ENCODE measurements at regions of chr7 and their contacts with region 1.

Region 1: GRCh38 chr7:116316833-116317612 is 106.7 kb downstream of the TES start:
- DNase-seq: peak; percentile 62
- H3K4me3 Mint-ChIP-seq: no peak overlapping the region
- H3K27ac Mint-ChIP-seq: peak overlapping the region; percentile 48
- H3K4me1 Mint-ChIP-seq: peaks cover 16% of the 10 kb centered on the region
- H3K27me3 Mint-ChIP-seq: peaks cover 24% of the 10 kb centered on the region

Region 2: DNA sequence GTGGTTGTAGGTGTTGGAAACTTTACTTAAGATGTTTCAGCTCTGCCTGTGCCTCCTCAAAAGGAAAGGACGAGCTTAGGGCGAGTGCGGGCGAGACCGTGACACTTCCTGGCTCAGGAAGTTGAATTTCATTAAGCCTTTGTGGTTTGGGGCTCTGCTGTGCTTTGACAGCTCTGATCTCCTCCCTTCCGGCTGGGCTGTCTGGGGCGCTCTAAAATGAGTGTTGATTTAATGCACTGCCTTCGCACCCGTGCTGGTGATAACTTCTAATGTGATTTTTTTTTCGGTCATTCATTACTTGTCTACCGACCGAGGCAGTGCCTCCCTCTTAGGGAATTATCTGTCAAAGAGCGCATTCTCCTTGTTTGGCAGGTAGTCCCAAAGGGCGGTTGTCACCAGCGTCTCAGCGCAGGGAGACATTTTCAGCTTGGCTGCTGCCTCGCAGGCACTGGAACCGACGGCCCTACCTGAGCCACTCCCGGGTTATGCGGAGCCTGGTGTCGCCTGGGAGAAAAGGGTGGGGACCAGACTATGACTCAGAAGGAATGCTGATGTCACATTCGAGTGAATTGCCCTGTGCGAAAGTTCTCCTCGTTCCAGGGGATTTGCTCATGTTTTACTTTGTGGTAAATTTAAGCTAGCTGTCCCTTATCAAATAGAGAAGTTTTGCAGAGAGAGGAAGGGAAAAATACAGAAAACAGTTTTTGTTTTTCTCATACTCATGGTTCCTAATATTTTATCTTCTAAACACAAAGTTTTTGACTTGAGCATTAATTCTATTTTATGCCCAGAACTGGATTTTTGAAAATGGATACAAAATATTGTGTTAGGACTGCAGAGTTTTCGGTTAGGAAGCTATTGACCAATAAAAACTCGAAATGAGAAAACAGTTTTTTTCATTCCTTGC is 105.8 kb before region 1 on chr7:
- CTCF ChIA-PET with region 1: no interaction called
- POLR2A ChIA-PET with region 1: no interaction called
- intact Hi-C with region 1: loop called (anchors 2 kb)
- DNase-seq: peak; percentile 86
- H3K4me3 Mint-ChIP-seq: peak overlapping the region; percentile 96
- H3K27ac Mint-ChIP-seq: peak overlapping the region; percentile 99
- H3K4me1 Mint-ChIP-seq: peaks cover 55% of the 10 kb centered on the region
- H3K27me3 Mint-ChIP-seq: no peaks in the 10 kb centered on the region

Region 3: DNA sequence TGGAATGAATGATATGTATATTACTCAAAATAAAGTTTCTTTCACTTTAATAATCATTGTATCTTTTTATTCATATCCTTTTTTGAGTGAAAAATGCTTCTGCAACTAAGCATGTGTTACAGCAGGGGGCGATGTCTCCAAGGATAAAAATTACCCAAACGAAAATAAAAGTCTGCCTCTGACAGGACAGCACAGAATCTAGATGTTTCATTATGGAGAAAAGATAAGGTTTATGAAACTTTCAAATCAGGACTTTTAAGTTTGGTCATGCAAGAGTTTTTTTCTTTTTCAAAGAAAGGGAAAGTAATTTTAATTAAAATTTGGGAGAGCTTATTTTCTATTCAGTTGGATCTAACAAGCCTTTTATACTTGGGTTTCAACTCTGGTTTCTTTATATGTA is 58.3 kb before region 1 on chr7:
- CTCF ChIA-PET with region 1: interaction called, 3 read pairs
- POLR2A ChIA-PET with region 1: no interaction called
- intact Hi-C with region 1: loop called (anchors 2 kb)
- DNase-seq: no peak
- H3K4me3 Mint-ChIP-seq: no peak overlapping the region
- H3K27ac Mint-ChIP-seq: no peak overlapping the region
- H3K4me1 Mint-ChIP-seq: peaks cover 12% of the 10 kb centered on the region
- H3K27me3 Mint-ChIP-seq: no peaks in the 10 kb centered on the region

Region 4: DNA sequence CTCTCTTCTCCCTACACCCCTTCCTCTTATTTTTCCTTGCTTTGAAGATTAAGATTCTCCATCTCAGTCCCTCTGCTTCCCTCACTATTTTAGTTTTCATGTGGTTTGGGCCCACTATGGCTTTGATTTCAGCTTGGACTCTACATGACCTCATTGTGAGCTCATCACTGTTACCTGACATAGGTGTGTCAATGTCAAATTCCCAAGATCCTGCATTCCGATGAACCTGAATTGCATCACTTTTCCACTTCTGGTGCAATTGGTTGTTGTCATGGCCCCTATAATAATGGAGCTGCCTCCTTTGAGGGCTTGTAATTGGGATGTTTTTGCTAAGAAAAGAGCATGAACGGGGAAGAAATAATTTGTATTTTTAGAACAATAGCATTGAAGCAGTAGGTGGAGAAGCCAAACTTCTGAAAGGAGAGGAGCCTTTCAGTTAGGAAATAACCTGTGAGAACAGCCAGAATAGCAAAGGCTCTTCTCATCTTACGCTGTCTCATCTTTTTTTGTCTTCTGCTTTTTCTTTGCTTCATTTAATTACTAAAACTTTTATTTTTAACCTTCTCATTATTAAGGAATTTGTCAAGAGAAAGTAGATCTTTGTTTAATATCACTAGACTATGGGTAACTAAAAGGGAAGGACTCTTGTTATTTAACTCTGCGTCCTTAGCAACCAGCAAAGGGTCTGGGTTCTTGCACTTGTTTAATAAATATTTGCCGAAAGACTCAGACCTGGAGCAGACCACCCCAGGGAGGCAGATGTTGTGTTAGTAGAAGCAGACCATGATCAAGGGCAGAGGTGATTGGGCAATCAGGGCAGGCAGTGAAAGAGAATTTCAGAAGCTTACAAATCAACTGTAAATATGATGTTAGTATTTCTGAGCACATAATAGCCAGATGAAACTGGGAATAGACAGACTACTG is 11.3 kb before region 1 on chr7:
- CTCF ChIA-PET with region 1: no interaction called
- POLR2A ChIA-PET with region 1: no interaction called
- intact Hi-C with region 1: no loop called
- DNase-seq: no peak
- H3K4me3 Mint-ChIP-seq: no peak overlapping the region
- H3K27ac Mint-ChIP-seq: no peak overlapping the region
- H3K4me1 Mint-ChIP-seq: no peaks in the 10 kb centered on the region
- H3K27me3 Mint-ChIP-seq: peaks cover 9% of the 10 kb centered on the region

Region 5: GRCh38 chr7:116340943-116341907 is 24.2 kb after region 1 on chr7:
- CTCF ChIA-PET with region 1: no interaction called
- POLR2A ChIA-PET with region 1: no interaction called
- intact Hi-C with region 1: loop called (anchors 1 kb)
- DNase-seq: no peak
- H3K4me3 Mint-ChIP-seq: no peak overlapping the region
- H3K27ac Mint-ChIP-seq: no peak overlapping the region
- H3K4me1 Mint-ChIP-seq: peaks cover 4% of the 10 kb centered on the region
- H3K27me3 Mint-ChIP-seq: peaks cover 10% of the 10 kb centered on the region

Region 6: GRCh38 chr7:116511552-116512519 is 194.8 kb after region 1 on chr7:
- CTCF ChIA-PET with region 1: no interaction called
- POLR2A ChIA-PET with region 1: no interaction called
- intact Hi-C with region 1: loop called (anchors 5 kb)
- DNase-seq: peak; percentile 24
- H3K4me3 Mint-ChIP-seq: peak overlapping the region; percentile 54
- H3K27ac Mint-ChIP-seq: no peak overlapping the region
- H3K4me1 Mint-ChIP-seq: peaks cover 18% of the 10 kb centered on the region
- H3K27me3 Mint-ChIP-seq: peaks cover 17% of the 10 kb centered on the region

Region 7: GRCh38 chr7:116576350-116577319 is 259.6 kb after region 1 on chr7:
- CTCF ChIA-PET with region 1: no interaction called
- POLR2A ChIA-PET with region 1: no interaction called
- intact Hi-C with region 1: loop called (anchors 1 kb)
- DNase-seq: peak; percentile 35
- H3K4me3 Mint-ChIP-seq: no peak overlapping the region
- H3K27ac Mint-ChIP-seq: no peak overlapping the region
- H3K4me1 Mint-ChIP-seq: peaks cover 10% of the 10 kb centered on the region
- H3K27me3 Mint-ChIP-seq: peaks cover 6% of the 10 kb centered on the region

Region 8: GRCh38 chr7:116786791-116787443 is 469.9 kb after region 1 on chr7:
- CTCF ChIA-PET with region 1: no interaction called
- POLR2A ChIA-PET with region 1: no interaction called
- intact Hi-C with region 1: loop called (anchors 10 kb)
- DNase-seq: peak; percentile 40
- H3K4me3 Mint-ChIP-seq: no peak overlapping the region
- H3K27ac Mint-ChIP-seq: no peak overlapping the region
- H3K4me1 Mint-ChIP-seq: no peaks in the 10 kb centered on the region
- H3K27me3 Mint-ChIP-seq: no peaks in the 10 kb centered on the region